ENCODE measurements at regions of chr3 and their contacts with region 1.

Region 1: GRCh38 chr3:36707623-36708409 is 56.5 kb downstream of the DCLK3 start:
- DNase-seq: peak; percentile 65
- ATAC-seq: peak; percentile 65
- H3K4me3 ChIP-seq: no peak overlapping the region
- H3K27ac ChIP-seq: no peak overlapping the region
- H3K4me1 ChIP-seq: no peaks in the 10 kb centered on the region
- H3K27me3 ChIP-seq: peaks cover 10% of the 10 kb centered on the region; the same call in 1 of the 2 replicates
- CTCF ChIP-seq: peak; percentile 43
- POLR2A ChIP-seq: no peak
- RAD21 ChIP-seq: peak; percentile 58

Region 2: DNA sequence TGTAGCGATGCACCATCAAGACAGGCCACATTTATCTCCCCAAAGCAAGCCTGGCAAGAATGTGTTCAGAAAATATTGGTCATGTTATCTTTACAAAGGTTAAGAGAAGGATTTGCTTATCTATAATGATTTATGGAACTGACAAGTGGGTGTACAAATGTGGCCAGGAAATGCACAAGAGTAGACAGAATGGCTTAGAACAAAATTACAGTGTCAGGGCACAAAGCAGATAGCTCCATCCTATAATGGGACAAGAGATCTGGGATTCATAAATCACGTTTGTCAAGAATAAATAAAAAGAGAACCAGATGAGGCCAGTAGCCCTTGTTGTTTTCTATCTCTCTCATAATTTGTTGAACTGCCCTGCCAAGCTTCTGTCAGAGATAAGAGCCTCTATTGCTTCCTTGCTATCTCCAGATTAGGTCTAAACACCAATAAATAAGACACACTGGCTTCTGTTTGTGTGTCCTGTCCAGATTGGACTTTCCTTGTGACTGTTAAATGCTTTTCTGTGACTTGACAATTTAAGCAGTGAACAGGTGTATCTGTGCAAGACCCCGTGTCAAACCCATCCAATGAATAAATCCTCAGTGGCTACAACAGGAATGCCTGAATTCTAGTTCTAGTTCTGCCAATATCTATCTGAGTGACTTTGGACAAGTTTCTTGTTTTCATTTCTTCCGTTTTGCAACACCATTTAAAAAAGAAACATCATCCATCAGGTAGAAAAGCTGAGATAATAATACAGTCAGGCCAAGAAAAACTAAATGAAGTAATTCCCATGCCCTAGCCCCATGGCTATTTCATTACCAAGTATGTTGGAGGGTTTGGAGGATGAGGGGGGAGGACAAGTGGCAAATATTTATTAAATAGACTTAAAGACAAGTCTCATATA is 100.7 kb before region 1 on chr3:
- CTCF ChIA-PET with region 1: no interaction called
- POLR2A ChIA-PET with region 1: no interaction called
- dilution Hi-C with region 1: no loop called
- in situ Hi-C with region 1: no loop called
- intact Hi-C with region 1: no loop called
- DNase-seq: no peak
- ATAC-seq: no peak
- H3K4me3 ChIP-seq: no peak overlapping the region
- H3K27ac ChIP-seq: no peak overlapping the region
- H3K4me1 ChIP-seq: no peaks in the 10 kb centered on the region
- H3K27me3 ChIP-seq: no peaks in the 10 kb centered on the region; the same call in 1 of the 2 replicates
- CTCF ChIP-seq: no peak
- POLR2A ChIP-seq: no peak
- RAD21 ChIP-seq: no peak

Region 3: GRCh38 chr3:37397396-37397795 is 689.6 kb after region 1 on chr3:
- CTCF ChIA-PET with region 1: no interaction called
- POLR2A ChIA-PET with region 1: no interaction called
- dilution Hi-C with region 1: no loop called
- in situ Hi-C with region 1: no loop called
- intact Hi-C with region 1: loop called (anchors 5 kb)
- DNase-seq: peak; percentile 20
- ATAC-seq: no peak
- H3K4me3 ChIP-seq: no peak overlapping the region
- H3K27ac ChIP-seq: no peak overlapping the region
- H3K4me1 ChIP-seq: no peaks in the 10 kb centered on the region
- H3K27me3 ChIP-seq: no peaks in the 10 kb centered on the region
- CTCF ChIP-seq: no peak
- POLR2A ChIP-seq: no peak
- RAD21 ChIP-seq: no peak

Measured in IMR-90 (cell line).